Activated CD8-positive, alpha-beta T cell treated with anti-CD3 and anti-CD28 coated beads, Interleukin-2, amount 10 ng/mL, durations not matched to agents 7 days and 5 days (primary cell): ENCODE measurements at regions of chr22 and their contacts with region 1.

Region 1: GRCh38 chr22:37566903-37567820 is 6.9 kb downstream of the CDC42EP1 start:
- DNase-seq: peak; percentile 97
- ATAC-seq: peak; percentile 91
- H3K4me3 Mint-ChIP-seq: peak overlapping the region; percentile 63
- H3K27ac Mint-ChIP-seq: peak overlapping the region; percentile 79
- H3K4me1 Mint-ChIP-seq: peaks cover 28% of the 10 kb centered on the region
- H3K27me3 Mint-ChIP-seq: peaks cover 36% of the 10 kb centered on the region

Region 2: DNA sequence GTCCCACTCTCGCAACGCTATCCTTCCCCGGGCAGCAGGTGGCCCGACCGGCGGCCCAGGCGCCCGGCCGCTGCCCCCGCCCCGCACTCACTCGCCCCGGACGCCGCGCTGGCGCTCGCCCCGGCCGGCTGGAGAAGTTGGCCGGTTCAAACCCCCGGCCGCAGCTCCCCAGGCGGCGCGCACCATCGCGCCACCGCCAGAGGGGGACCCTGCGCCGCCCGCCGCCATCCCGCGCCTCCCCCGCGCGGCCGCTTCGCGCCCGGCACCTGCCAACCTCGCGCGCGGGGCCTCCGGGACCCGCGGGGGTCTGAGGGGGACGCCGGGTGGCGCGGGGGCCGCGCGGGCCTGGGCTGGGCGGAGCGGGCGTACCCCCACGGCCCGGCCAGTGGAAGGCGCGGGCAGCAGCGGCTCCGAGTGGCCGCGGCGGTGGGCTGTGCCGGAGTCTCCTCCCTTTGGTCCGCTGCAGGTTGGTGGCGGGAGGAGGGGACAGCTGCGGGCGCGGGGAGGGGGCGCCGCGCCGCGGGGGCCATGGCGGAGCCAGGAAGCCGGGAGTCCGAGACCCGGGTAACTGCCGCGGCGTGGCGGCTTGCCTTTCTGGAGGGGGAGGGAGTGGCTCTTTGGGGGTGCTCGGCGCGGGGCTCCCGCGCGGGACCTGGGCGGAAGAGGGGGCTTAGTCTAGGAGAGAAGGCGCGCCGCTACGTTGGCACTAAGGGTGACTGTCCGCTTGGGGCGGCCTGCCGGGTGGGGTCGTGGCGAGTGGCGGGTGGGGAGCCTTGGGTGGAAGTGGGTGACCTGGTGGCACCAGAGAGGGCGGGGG is 547.6 kb before region 1 on chr22 and contains the starts of genes MPST and TST:
- CTCF ChIA-PET with region 1: no interaction called
- POLR2A ChIA-PET with region 1: no interaction called
- DNase-seq: peak; percentile 54
- ATAC-seq: peak; percentile 87
- H3K4me3 Mint-ChIP-seq: peak within 1 kb of the TSS; percentile 88
- H3K27ac Mint-ChIP-seq: peak within 1 kb of the TSS; percentile 87
- H3K4me1 Mint-ChIP-seq: peaks cover 24% of the 10 kb centered on the region
- H3K27me3 Mint-ChIP-seq: peaks cover 2% of the 10 kb centered on the region
- total RNA-seq, gene MPST: 28.5 to 33.6 TPM
- total RNA-seq, gene TST: 8.3 to 9.4 TPM

Region 3: GRCh38 chr22:37309211-37310074 is 257.7 kb before region 1 on chr22:
- CTCF ChIA-PET with region 1: interaction called, 10 read pairs
- POLR2A ChIA-PET with region 1: no interaction called
- DNase-seq: peak; percentile 86
- ATAC-seq: peak; percentile 48
- H3K4me3 Mint-ChIP-seq: peak overlapping the region; percentile 45
- H3K27ac Mint-ChIP-seq: peak overlapping the region; percentile 96
- H3K4me1 Mint-ChIP-seq: peaks cover 95% of the 10 kb centered on the region
- H3K27me3 Mint-ChIP-seq: no peaks in the 10 kb centered on the region

Region 4: GRCh38 chr22:37472418-37473006 is 94.7 kb before region 1 on chr22:
- CTCF ChIA-PET with region 1: interaction called, 39 read pairs
- POLR2A ChIA-PET with region 1: no interaction called
- DNase-seq: peak; percentile 51
- ATAC-seq: peak; percentile 56
- H3K4me3 Mint-ChIP-seq: no peak overlapping the region
- H3K27ac Mint-ChIP-seq: peak overlapping the region; percentile 57
- H3K4me1 Mint-ChIP-seq: peaks cover 20% of the 10 kb centered on the region
- H3K27me3 Mint-ChIP-seq: no peaks in the 10 kb centered on the region

Region 5: GRCh38 chr22:37538590-37539357 is 28.4 kb before region 1 on chr22:
- CTCF ChIA-PET with region 1: interaction called, 493 read pairs
- POLR2A ChIA-PET with region 1: interaction called, 8 read pairs
- DNase-seq: peak; percentile 95
- ATAC-seq: peak; percentile 99
- H3K4me3 Mint-ChIP-seq: peak overlapping the region; percentile 3
- H3K27ac Mint-ChIP-seq: peak overlapping the region; percentile 20
- H3K4me1 Mint-ChIP-seq: peaks cover 52% of the 10 kb centered on the region
- H3K27me3 Mint-ChIP-seq: peaks cover 20% of the 10 kb centered on the region

Region 6: GRCh38 chr22:37588546-37589215 is 21.5 kb after region 1 on chr22:
- CTCF ChIA-PET with region 1: interaction called, 97 read pairs
- POLR2A ChIA-PET with region 1: interaction called, 4 read pairs
- DNase-seq: no peak
- ATAC-seq: no peak
- H3K4me3 Mint-ChIP-seq: no peak overlapping the region
- H3K27ac Mint-ChIP-seq: no peak overlapping the region
- H3K4me1 Mint-ChIP-seq: peaks cover 11% of the 10 kb centered on the region
- H3K27me3 Mint-ChIP-seq: peaks cover 12% of the 10 kb centered on the region

Region 7: DNA sequence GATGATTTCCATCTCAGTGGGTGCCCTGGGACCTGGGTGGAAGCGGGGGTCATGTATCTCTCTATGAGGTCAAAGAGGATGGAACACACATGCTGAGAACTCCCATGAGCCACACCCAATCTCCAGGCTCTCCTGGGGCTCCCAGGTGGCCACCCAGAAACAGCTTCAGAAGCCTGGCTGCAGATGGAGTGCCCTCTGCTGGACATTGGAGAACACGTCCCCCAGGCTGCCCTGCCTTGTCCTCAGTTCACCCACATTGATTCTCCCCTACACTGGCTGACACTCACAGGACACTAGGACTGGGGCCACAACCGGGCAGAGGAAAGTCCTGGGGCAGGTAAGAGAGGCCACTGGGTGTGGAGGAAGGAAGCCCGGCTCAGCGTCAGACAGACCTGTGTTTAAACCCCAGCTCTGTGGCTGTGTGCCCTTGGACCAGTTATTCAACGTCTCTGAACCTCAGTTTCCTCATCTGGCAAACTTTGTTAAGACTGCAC is 114.4 kb after region 1 on chr22:
- CTCF ChIA-PET with region 1: no interaction called
- POLR2A ChIA-PET with region 1: no interaction called
- DNase-seq: peak; percentile 84
- ATAC-seq: peak; percentile 47
- H3K4me3 Mint-ChIP-seq: no peak overlapping the region
- H3K27ac Mint-ChIP-seq: peak overlapping the region; percentile 79
- H3K4me1 Mint-ChIP-seq: peaks cover 34% of the 10 kb centered on the region
- H3K27me3 Mint-ChIP-seq: no peaks in the 10 kb centered on the region